GM18951 (cell line): ENCODE measurements at regions of chr2 and their contacts with region 1.

Region 1: DNA sequence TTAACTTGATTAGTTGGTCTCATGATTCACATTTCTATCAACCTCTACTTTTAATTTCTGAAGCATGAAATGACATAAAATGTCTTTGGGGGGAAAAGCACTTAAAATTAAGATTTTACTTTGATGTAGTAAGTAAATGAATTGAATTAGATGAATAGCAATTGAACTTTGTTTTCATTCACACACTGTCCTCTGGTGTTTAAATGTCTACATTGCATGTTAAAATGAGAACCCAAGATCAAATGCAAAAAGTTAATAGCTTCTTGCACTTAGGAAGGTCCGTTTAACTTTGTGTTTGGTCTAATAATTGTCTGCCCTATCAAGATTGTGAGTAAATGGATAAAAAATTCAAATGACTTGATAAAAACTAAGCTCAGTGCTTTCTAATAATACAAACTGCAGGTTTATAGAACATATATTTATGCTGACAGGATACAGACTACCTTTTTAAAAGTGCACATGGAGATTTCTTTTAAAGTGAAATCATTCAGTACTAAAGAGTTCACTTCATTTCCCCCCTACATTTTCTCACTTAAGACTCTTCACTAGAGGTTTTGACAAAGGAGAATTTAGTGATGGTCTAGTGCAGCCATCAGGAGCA is 156.2 kb upstream of the NABP1 start:
- POLR2A ChIP-seq: no peak

Region 2: DNA sequence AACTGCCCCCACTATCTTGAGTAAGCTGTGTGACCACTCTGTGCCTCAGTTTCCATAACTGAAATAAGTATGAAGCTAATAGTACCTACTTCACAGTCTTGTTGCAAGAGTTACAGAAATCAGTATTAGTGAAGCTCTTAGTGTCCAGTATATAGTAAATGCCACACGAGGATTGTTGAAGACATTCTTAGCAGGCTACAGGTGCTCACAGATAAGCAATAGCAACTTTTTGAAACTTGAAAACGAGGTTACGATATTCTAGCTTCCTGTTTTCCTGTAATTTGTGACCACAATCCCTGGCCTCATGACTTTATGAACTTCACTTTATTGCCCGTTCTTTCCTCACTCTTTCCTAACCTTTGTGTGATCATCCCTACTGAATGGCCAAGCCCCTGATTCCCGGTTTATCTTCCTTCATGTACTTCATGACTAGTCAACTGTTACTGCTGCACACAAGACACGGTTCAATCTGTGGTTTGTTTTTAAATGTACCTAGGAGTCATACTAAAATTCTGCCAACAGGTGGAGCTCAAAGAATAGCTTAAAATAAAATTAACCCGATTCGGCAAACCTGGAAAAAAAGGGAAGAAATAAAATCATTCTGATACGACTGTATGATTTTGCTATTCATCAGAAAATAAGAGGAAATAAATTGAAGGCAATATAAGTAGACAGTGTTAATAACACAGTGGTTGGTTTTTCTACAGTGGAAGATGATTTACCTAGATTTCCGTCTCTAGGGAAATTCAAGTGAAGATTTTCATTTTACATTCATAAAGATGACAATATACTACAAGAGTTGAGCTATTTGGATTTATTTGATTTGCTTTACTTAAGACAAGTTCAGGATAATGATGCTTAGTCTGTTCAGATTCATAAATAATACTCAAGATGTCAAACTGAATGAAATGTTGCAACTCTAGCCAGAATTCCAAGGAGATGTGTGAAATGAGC is 469.6 kb before region 1 on chr2:
- in situ Hi-C with region 1: loop called (anchors 25 kb)
- POLR2A ChIP-seq: no peak